HEK293 (cell line): ENCODE measurements at regions of chr9 and their contacts with region 1.

Region 1: GRCh38 chr9:133726401-133727276 is 11.5 kb downstream of the SARDH start:
- H3K4me3 ChIP-seq: no peak overlapping the region
- H3K27ac ChIP-seq: no peak overlapping the region
- H3K4me1 ChIP-seq: no peaks in the 10 kb centered on the region
- CTCF ChIP-seq: peak; percentile 51

Region 2: GRCh38 chr9:133478851-133479711 is 247.6 kb before region 1 on chr9 and contains the start of gene SLC2A6:
- CTCF ChIA-PET with region 1: no interaction called
- POLR2A ChIA-PET with region 1: no interaction called
- H3K4me3 ChIP-seq: peak within 1 kb of the TSS; percentile 52
- H3K27ac ChIP-seq: no peak within 1 kb of the TSS; the same call in 1 of the 2 replicates
- H3K4me1 ChIP-seq: no peaks in the 10 kb centered on the region
- CTCF ChIP-seq: no peak

Region 3: DNA sequence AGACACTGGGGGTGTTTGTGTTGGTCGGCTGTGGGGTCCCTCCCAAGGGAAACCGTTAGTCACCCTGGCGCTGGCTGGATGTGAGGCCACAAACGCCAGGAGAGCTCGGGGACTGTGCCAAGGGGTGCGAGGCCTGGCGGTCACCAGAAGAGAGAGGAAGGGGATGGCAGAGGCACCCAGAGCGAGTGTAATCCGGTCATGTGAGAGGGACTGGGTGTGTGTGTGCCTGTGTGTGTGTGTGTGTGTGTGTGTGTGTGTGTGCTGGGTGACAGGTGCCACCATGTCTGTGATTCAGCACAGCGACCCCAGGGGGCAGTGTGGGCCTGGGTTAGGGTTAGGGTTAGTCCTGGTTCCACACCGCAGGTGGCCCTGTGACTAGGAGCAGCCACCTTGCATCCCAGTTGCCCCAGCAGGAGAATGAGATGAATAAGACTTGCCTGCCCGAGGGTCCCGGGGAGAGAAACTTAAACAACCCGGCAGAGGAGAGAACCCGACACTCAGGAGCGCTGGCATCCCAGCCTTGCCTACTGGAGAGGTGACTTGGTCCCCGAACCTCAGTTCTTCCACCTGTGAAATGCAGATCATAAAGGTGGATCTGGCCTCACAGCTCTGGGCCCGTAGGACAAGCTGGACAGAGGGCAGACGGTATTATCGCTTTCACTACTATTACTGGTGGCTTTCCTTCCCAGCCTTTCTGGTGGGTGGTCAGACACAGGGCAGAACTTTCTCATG is 193.5 kb before region 1 on chr9:
- CTCF ChIA-PET with region 1: interaction called, 36 read pairs
- POLR2A ChIA-PET with region 1: no interaction called
- H3K4me3 ChIP-seq: no peak overlapping the region
- H3K27ac ChIP-seq: no peak overlapping the region
- H3K4me1 ChIP-seq: no peaks in the 10 kb centered on the region
- CTCF ChIP-seq: peak; percentile 93

Region 4: DNA sequence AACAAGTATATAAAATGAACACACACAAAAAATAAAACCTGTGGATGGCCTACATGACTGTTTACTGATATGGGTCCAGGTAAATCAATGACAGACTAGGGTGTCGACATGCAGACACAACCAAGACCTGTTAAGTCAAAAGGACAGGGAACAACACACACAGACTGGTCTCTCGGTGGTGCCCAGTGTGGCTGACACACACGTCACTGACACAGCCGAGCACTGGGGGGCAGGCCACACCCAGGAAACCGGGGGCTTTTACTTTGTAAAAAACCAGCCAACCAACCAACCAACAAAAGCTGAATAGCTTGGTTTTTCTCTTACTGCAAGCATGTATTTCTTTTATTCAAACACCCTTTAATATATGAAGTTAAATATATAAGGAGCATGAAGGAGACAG is 122.4 kb before region 1 on chr9:
- CTCF ChIA-PET with region 1: interaction called, 15 read pairs
- POLR2A ChIA-PET with region 1: no interaction called
- H3K4me3 ChIP-seq: no peak overlapping the region
- H3K27ac ChIP-seq: no peak overlapping the region
- H3K4me1 ChIP-seq: no peaks in the 10 kb centered on the region
- CTCF ChIP-seq: no peak

Region 5: DNA sequence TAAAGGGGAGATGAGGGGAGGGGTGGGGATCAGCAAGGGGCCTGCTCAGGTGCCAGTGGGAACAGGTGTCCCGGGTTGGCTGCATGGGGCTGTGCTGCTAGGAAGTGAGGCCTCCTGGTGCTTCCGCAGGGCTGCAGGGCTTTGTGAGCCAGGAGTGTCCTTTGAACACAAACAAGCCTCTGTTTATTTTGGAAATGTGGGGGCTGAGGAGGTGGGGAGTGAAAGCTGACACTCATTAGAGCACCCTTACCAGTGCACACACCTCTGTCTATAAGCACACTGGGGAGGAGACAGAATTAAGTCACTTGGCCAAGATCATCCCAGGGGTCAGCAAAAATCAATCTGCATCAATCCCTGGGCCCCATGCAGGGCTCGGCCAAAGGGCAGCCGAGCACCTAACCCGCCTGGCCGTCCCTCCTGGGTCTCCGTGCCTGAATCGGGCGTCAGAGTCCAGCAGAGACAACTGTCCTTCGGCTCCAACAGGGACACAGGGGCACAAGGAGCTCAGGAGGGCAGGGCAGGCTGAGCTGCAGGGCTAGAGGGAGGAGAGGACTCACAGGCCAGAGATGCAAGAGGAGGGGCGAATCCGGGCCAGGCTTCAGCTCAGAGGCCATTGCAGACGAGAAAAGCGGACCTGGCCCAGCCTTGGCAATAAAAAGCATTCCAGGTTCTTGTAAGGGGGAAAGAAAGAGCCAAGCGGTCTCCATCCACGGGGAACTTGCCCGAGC is 165.7 kb after region 1 on chr9:
- CTCF ChIA-PET with region 1: no interaction called
- POLR2A ChIA-PET with region 1: no interaction called
- H3K4me3 ChIP-seq: no peak overlapping the region
- H3K27ac ChIP-seq: no peak overlapping the region
- H3K4me1 ChIP-seq: no peaks in the 10 kb centered on the region
- CTCF ChIP-seq: no peak